ENCODE measurements at regions of chr9 and their contacts with region 1.

Region 1: DNA sequence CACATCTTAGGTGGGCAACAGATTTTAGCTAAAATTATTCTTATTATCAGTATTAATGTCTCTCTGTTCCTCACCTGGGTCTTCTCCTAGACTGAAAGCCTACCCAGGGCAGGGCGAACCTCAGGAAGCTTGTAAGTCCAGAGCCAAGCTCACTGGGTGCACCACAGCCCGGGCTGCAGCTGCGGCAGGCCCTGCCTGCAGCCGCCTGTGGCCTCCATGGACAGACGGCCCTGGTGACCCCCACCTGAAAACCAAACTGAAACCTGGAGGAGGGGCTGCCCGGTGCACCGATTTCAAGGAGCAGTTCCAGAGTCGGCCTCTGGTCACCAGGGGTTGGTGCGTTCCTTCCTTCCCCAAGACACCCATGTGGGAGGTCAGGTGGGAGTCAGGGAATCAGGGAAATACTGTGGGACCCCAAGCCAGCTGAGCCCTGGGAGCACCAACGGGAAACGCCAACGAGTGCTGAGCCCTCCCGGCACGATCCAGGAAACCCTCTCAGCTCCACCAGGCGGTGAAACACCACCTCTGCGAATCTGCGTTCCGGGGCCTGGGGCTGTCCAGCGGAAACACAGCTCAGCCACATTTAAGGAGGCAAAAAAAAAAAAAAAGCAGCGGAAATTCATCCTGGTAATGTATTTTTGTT is 68.6 kb upstream of the PPP1R26 start:
- DNase-seq: no peak
- ATAC-seq: no peak
- H3K4me3 Mint-ChIP-seq: no peak overlapping the region
- H3K27ac Mint-ChIP-seq: no peak overlapping the region
- H3K4me1 Mint-ChIP-seq: no peaks in the 10 kb centered on the region
- H3K27me3 Mint-ChIP-seq: peaks cover 2% of the 10 kb centered on the region

Region 2: DNA sequence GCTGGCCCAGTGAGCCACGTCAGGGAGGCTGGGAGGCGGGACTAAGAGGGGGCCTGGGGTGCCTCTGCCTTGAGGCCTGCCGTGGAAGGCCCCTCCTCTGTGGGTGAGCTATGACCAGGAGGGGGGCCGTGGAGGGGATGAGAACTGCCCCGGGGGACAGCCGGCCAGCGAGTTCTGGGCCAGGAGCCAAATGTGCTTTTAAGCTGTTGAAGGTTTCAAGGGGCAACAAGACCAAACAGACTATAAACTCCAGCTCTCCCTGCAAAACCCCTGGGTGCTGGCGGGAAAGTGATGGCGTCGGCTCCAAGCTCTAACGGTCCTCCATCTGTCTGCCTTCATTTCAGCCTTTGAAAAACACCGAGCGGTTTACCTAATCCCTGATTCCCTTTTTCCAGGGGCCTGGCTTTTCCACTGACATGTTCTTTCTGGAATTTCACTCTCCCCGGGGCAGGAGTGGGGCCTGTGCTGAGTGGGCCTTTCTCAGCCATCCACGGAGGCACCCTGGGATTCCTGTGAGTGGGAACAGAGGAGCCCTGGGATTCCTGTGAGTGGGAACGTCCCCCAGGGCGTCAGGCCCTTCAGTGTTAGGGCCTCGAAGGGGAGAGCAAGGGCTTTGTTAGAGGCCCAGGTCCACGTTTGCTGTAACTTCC is 703.8 kb before region 1 on chr9:
- CTCF ChIA-PET with region 1: no interaction called
- POLR2A ChIA-PET with region 1: no interaction called
- intact Hi-C with region 1: loop called in 1 of 2 experiments (anchors 10 kb)
- DNase-seq: no peak
- ATAC-seq: no peak
- H3K4me3 Mint-ChIP-seq: no peak overlapping the region
- H3K27ac Mint-ChIP-seq: no peak overlapping the region
- H3K4me1 Mint-ChIP-seq: no peaks in the 10 kb centered on the region
- H3K27me3 Mint-ChIP-seq: no peaks in the 10 kb centered on the region

Region 3: DNA sequence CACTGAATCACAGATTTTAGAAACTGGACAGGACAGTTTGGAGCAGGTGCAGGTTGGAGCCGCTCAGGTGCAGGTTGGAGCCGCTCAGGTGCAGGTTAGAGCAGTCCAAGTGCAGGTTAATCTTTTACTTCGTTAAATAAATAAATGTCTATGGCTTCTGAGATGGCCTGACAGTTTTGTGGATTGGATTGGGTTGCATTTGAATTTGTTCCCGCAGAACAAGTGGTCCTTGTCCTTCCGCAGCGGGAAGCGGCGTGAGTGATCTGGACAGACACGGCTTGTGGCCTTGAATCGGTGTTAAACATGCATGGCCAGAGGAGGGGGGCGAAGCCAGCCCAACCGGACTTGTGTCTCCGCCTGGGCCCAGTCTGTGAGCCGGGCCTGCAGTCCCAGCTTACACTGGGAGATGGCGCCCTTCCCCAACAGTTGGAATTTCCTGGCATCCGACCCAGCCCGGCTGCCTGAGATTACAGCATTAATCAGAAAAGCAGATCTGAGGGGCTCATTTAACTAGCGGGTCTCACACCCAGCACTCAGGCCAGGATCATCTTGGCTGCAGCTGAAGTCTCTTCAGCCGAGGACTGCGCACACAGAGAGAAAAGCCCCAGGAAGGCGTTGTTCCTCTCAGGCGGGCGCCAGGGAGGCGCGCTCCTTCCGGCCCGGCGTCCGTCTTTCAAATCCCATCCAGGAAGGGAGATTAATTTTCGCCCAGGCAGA is 325.0 kb before region 1 on chr9:
- CTCF ChIA-PET with region 1: interaction called, 7 read pairs
- POLR2A ChIA-PET with region 1: no interaction called
- intact Hi-C with region 1: loop called (anchors 1 kb)
- DNase-seq: peak; percentile 77
- ATAC-seq: no peak
- H3K4me3 Mint-ChIP-seq: no peak overlapping the region
- H3K27ac Mint-ChIP-seq: no peak overlapping the region
- H3K4me1 Mint-ChIP-seq: peaks cover 3% of the 10 kb centered on the region
- H3K27me3 Mint-ChIP-seq: peaks cover 36% of the 10 kb centered on the region

Region 4: GRCh38 chr9:135343837-135344522 is 67.0 kb before region 1 on chr9:
- CTCF ChIA-PET with region 1: no interaction called
- POLR2A ChIA-PET with region 1: no interaction called
- intact Hi-C with region 1: loop called in 1 of 2 experiments (anchors 5 kb)
- DNase-seq: peak; percentile 76
- ATAC-seq: peak; percentile 42
- H3K4me3 Mint-ChIP-seq: no peak overlapping the region
- H3K27ac Mint-ChIP-seq: no peak overlapping the region
- H3K4me1 Mint-ChIP-seq: no peaks in the 10 kb centered on the region
- H3K27me3 Mint-ChIP-seq: peaks cover 6% of the 10 kb centered on the region